Activated T-helper 1 cell treated with anti-CD3 and anti-CD28 coated beads, Interleukin-12 subunit alpha, Interleukin-12 subunit beta, Interleukin-2, Interleukin-4 antibody, amounts not matched to agents 30 ng/mL and 10 ng/mL and 1 ng/mL, durations not matched to agents 14 hours and 24 hours and 36 hours (primary cell): ENCODE measurements at regions of chr9 and their contacts with region 1.

Region 1: GRCh38 chr9:99819856-99820684 is 1.6 kb upstream of the NR4A3 start:
- DNase-seq: peak; percentile 79
- H3K4me3 Mint-ChIP-seq: peak overlapping the region; percentile 97
- H3K27ac Mint-ChIP-seq: peak overlapping the region; percentile 95
- H3K4me1 Mint-ChIP-seq: peaks cover 63% of the 10 kb centered on the region
- H3K27me3 Mint-ChIP-seq: peaks cover 33% of the 10 kb centered on the region

Region 2: GRCh38 chr9:97982683-97983588 is 1837.1 kb before region 1 on chr9 and contains the start of gene ANP32B:
- intact Hi-C with region 1: loop called (anchors 5 kb)
- DNase-seq: peak; percentile 93
- H3K4me3 Mint-ChIP-seq: peak within 1 kb of the TSS; percentile 80
- H3K27ac Mint-ChIP-seq: peak within 1 kb of the TSS; percentile 78
- H3K4me1 Mint-ChIP-seq: peaks cover 46% of the 10 kb centered on the region
- H3K27me3 Mint-ChIP-seq: no peaks in the 10 kb centered on the region
- total RNA-seq, gene ANP32B: 305 and 313 TPM in 2 replicates

Region 3: DNA sequence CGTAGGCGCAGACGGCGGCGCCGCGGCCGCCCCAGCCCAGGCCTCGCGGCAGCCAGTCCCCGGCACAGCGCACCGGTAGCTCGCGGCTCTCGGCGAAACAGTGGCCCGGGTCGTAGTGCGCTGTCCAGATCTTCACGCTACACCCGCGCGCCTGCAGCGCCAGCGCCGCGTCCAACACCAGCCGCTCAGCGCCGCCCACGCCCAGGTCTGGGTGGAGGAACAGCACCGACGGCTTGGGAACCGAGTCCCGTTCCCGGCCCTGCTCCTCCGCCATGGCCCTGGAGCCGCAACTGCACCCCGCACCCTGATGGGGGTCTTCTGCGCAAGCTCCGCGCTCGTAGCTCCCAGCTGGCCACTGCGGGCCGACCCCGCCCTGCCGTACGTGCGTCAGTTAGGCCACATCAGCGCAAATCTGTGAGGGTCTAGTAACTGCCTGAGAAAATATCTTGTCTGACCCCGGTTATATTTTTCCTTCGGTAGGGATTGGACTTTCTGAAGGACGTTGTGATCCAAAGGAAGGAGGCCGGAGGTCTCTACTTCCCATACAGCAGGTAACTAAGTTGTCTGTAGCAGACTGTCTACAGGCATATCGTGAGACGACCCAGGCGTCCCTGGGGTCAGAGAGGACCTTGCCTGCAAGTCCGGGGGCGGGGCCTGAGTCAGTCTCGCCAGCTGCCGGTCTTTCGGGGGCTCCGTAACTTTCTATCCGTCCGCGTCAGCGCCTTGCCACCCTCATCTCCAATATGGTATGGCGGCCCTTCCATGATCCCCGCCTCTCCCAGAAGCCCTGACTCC is 598.3 kb before region 1 on chr9 and contains the starts of genes ALG2 and SEC61B:
- intact Hi-C with region 1: loop called (anchors 1 kb)
- DNase-seq: peak; percentile 89
- H3K4me3 Mint-ChIP-seq: peak within 1 kb of the TSS; percentile 99
- H3K27ac Mint-ChIP-seq: peak within 1 kb of the TSS; percentile 98
- H3K4me1 Mint-ChIP-seq: peaks cover 67% of the 10 kb centered on the region
- H3K27me3 Mint-ChIP-seq: no peaks in the 10 kb centered on the region
- total RNA-seq, gene ALG2: 37.6 and 39.7 TPM in 2 replicates
- total RNA-seq, gene SEC61B: 180 and 184 TPM in 2 replicates

Region 4: DNA sequence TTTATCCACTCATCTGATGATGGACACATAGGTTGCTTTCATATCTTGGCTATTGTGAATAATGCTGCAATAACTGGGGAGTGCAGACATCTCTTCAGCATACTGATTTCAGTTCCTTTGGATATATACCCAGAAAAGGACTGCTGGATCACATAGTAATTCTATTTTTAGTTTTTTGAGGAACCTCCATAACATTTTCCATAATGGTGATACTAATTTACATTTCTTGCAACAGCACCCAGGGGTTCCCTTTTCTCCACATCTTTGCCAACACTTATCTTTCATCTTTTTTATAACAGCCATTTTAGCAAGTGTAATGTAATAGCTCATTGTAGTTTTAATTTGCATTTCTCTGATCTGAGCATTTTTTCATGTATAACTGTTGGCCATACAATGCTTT is 32.5 kb before region 1 on chr9:
- intact Hi-C with region 1: no loop called
- DNase-seq: no peak
- H3K4me3 Mint-ChIP-seq: no peak overlapping the region
- H3K27ac Mint-ChIP-seq: no peak overlapping the region
- H3K4me1 Mint-ChIP-seq: no peaks in the 10 kb centered on the region
- H3K27me3 Mint-ChIP-seq: peaks cover 31% of the 10 kb centered on the region

Region 5: DNA sequence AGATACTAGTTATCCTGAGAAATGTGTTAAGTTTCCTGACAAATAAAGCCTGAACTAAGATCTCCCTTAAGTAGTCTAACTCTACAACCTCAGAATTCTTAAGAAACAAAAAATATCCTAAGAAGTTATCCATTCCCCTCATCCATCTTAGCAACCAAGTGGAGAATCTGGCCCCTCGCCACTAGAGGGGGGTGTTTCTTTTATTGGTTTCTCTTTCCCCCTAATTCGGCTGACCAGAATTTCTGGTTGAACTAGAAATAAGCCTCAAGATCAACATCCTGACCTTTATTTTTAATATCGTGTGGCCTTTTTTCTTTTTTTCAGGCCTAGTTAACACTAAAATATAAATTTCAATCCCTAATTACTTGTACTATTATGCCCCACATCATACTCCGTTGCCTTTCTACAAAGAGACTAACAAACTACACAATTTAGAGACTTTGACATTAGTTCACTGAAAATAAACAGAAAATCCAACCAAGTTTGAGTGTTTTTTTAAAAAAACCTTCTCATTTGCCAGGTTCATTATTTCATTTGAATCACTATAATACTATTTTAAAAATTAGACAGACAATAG is 12.7 kb before region 1 on chr9:
- intact Hi-C with region 1: loop called (anchors 1 kb)
- DNase-seq: peak; percentile 43
- H3K4me3 Mint-ChIP-seq: no peak overlapping the region
- H3K27ac Mint-ChIP-seq: no peak overlapping the region
- H3K4me1 Mint-ChIP-seq: peaks cover 37% of the 10 kb centered on the region
- H3K27me3 Mint-ChIP-seq: peaks cover 26% of the 10 kb centered on the region

Region 6: GRCh38 chr9:99859243-99859980 is 39.3 kb after region 1 on chr9:
- intact Hi-C with region 1: no loop called
- DNase-seq: no peak
- H3K4me3 Mint-ChIP-seq: no peak overlapping the region
- H3K27ac Mint-ChIP-seq: no peak overlapping the region
- H3K4me1 Mint-ChIP-seq: peaks cover 5% of the 10 kb centered on the region
- H3K27me3 Mint-ChIP-seq: peaks cover 5% of the 10 kb centered on the region

Region 7: GRCh38 chr9:99896119-99896518 is 76.0 kb after region 1 on chr9:
- intact Hi-C with region 1: no loop called
- DNase-seq: no peak
- H3K4me3 Mint-ChIP-seq: no peak overlapping the region
- H3K27ac Mint-ChIP-seq: no peak overlapping the region
- H3K4me1 Mint-ChIP-seq: no peaks in the 10 kb centered on the region
- H3K27me3 Mint-ChIP-seq: peaks cover 42% of the 10 kb centered on the region

Region 8: GRCh38 chr9:99954819-99955218 is 134.7 kb after region 1 on chr9:
- intact Hi-C with region 1: loop called (anchors 2 kb)
- DNase-seq: no peak
- H3K4me3 Mint-ChIP-seq: no peak overlapping the region
- H3K27ac Mint-ChIP-seq: peak overlapping the region; percentile 8
- H3K4me1 Mint-ChIP-seq: peaks cover 14% of the 10 kb centered on the region
- H3K27me3 Mint-ChIP-seq: no peaks in the 10 kb centered on the region

Region 9: DNA sequence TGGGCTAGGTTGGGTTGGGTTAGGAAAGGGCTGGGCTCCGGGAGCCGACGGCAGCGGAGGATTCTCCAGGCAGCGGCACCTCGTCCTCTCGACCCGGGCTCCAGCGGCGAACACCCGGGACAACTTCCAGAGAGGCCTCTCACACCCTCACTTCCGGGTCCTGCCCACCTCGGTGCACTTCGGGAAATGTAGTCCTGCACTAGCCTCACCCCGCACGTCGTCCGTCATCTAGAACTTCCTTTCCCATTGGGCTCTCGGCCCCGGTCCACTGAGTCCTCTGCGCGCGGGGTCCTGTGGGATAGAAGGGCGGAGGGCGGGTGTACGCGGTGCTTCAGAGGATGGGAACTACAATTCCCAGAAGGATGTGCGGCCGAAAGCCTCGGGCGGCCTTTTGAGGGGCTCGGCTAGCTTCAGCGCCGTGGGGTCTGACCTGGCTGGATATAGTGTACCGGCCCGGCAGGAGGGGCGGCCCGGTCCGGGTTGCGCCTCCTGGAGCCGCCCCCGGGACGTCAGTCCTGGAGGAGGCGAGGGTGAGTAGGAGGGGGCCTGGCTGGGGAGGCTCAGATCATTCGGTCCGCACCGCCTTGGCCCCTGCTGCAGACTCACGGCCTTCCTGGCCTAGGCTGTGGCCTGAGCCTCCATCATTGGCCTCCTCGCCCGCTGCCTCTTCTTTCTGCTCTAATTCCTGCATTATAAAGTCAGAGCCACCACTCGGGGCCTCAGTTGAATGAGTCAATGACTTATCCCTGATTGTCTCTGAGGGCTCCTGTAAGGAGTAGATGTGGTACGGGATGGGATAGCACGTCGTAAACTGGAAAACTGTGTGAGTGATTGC is 279.0 kb after region 1 on chr9 and contains the starts of genes ERP44 and INVS:
- intact Hi-C with region 1: loop called (anchors 1 kb)
- DNase-seq: peak; percentile 96
- H3K4me3 Mint-ChIP-seq: peak within 1 kb of the TSS; percentile 99
- H3K27ac Mint-ChIP-seq: peak within 1 kb of the TSS; percentile 95
- H3K4me1 Mint-ChIP-seq: peaks cover 34% of the 10 kb centered on the region
- H3K27me3 Mint-ChIP-seq: no peaks in the 10 kb centered on the region
- total RNA-seq, gene ERP44: 17.3 and 18.1 TPM in 2 replicates
- total RNA-seq, gene INVS: 16.3 and 17.0 TPM in 2 replicates

Region 10: DNA sequence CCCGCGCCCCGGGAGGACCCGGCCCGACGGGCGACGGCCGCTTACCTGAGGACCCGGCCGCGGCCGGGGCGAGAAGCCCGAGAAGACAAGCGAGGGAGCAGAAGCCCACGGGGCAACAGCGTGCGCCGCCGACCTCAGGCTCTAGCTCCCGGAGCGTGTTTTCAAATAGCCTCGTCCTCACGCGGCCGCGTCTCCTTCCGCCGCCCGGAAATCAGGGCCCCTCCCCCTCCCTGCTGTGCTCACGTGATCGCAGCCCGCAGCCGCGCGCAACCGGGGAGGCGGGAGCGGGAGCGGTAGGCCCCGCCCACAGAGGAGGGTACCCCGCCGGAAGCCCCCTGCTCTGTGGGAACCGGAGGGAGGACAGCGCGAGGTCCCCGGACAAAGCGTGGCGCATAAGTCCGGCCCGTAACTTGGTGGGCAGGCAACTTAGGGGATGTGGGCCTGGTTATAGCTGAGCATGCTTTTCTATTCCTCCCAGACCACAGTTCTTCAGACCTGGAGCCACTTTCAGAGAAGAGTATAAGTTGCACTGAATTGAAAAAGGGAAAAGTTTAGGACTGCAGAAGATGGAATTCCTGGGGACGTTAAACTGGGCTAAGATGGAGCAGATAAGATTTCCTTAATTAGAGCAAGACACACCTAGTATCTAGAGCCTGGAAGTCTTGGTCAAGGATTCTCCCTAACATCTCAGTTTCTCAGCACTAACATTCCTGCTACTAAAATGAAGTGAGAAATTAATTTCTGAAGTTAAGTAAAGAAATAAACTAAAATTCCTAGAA is 532.8 kb after region 1 on chr9 and contains the start of gene TEX10:
- intact Hi-C with region 1: loop called (anchors 10 kb)
- DNase-seq: peak; percentile 85
- H3K4me3 Mint-ChIP-seq: peak within 1 kb of the TSS; percentile 91
- H3K27ac Mint-ChIP-seq: peak within 1 kb of the TSS; percentile 75
- H3K4me1 Mint-ChIP-seq: peaks cover 50% of the 10 kb centered on the region
- H3K27me3 Mint-ChIP-seq: no peaks in the 10 kb centered on the region
- total RNA-seq, gene TEX10: 30.4 and 30.9 TPM in 2 replicates